Naive thymus-derived CD4-positive, alpha-beta T cell (primary cell): ENCODE measurements at regions of chr7 and their contacts with region 1.

Region 1: GRCh38 chr7:40041456-40041855 is 91.4 kb downstream of the CDK13 start:
- DNase-seq: no peak
- ATAC-seq: no peak
- H3K4me3 ChIP-seq: no peak overlapping the region
- H3K4me3 Mint-ChIP-seq: no peak overlapping the region
- H3K27ac ChIP-seq: no peak overlapping the region
- H3K27ac Mint-ChIP-seq: peak overlapping the region in 2 of 9 donors; percentile 14 to 71
- H3K4me1 ChIP-seq: no peaks in the 10 kb centered on the region
- H3K4me1 Mint-ChIP-seq: peaks cover 2 to 24% (median 19%) of the 10 kb centered on the region in 7 donors
- H3K27me3 ChIP-seq: no peaks in the 10 kb centered on the region
- H3K27me3 Mint-ChIP-seq: no peaks in the 10 kb centered on the region

Region 2: GRCh38 chr7:40008223-40008815 is 33.1 kb before region 1 on chr7:
- CTCF ChIA-PET with region 1: no interaction called
- POLR2A ChIA-PET with region 1: no interaction called
- intact Hi-C with region 1: loop called in 1 of 2 experiments (anchors 5 kb)
- DNase-seq: no peak
- ATAC-seq: no peak
- H3K4me3 ChIP-seq: no peak overlapping the region
- H3K4me3 Mint-ChIP-seq: no peak overlapping the region
- H3K27ac ChIP-seq: no peak overlapping the region
- H3K27ac Mint-ChIP-seq: peak overlapping the region in 1 of 9 donors; percentile 33
- H3K4me1 ChIP-seq: no peaks in the 10 kb centered on the region
- H3K4me1 Mint-ChIP-seq: peaks cover 2 to 24% (median 11%) of the 10 kb centered on the region in 7 donors
- H3K27me3 ChIP-seq: no peaks in the 10 kb centered on the region
- H3K27me3 Mint-ChIP-seq: no peaks in the 10 kb centered on the region

Region 3: DNA sequence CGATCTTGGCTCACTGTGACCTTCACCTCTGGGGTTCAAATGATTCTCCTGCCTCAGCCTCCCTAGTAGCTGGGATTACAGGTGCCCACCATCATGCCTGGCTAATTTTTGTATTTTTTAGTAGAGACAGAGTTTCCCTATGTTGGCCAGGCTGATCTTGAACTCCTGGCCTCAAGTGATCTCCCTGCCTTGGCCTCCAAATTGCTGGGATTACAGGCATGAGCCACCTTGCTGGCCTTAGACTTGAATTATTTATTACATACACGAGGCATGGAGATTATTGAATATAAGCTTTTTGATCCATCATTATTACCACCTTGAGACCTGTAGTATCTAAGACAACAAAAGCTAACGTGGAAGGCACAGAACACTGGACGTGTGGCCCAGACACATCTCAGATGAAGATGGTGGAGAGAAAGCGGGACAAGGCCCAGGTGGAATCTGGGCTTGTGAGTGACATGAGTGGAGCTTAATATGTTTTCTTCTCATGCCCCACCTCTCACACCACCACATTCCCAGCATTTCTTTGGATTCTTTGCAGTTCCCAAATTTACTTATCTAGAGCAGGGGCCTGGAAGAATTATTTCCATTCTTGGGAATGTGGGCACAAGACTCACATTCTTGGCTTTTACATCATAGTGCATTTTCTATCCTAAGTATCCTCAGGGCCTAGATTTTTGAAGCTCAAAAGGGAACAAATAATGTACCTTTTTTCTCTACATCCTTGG is 170.0 kb after region 1 on chr7:
- CTCF ChIA-PET with region 1: no interaction called
- POLR2A ChIA-PET with region 1: no interaction called
- intact Hi-C with region 1: no loop called
- DNase-seq: no peak
- ATAC-seq: no peak
- H3K4me3 ChIP-seq: no peak overlapping the region
- H3K4me3 Mint-ChIP-seq: no peak overlapping the region
- H3K27ac ChIP-seq: no peak overlapping the region
- H3K27ac Mint-ChIP-seq: no peak overlapping the region
- H3K4me1 ChIP-seq: no peaks in the 10 kb centered on the region
- H3K4me1 Mint-ChIP-seq: no peaks in the 10 kb centered on the region
- H3K27me3 ChIP-seq: no peaks in the 10 kb centered on the region
- H3K27me3 Mint-ChIP-seq: no peaks in the 10 kb centered on the region